Heart left ventricle (tissue), 16 donors: ENCODE measurements at regions of chr1 and their contacts with region 1.

Region 1: DNA sequence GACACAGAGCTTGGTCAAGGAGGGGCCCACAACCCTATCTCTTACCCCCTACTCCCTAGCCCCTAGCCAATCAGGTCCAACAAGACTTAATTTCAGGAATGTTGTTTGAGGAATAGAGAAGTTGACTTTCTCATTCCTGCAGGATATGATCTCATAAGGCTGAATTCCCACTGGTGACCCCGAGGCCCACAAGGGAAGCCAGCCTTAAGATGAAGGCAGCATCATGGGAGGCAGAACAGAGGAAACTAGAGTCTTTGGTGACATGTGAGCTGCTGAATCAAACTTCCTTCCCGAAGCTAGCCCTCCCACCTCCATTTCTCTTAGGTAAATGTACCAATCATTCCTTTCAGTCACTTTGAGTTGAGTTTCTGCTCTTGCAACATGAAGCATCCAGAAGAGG is 9.1 kb upstream of the PDIK1L start:
- DNase-seq: no peak
- ATAC-seq: no peak
- H3K4me3 ChIP-seq: no peak overlapping the region
- H3K27ac ChIP-seq: no peak overlapping the region
- H3K4me1 ChIP-seq: peaks cover 0 to 11% (median 2%) of the 10 kb centered on the region in 12 donors
- H3K27me3 ChIP-seq: no peaks in the 10 kb centered on the region
- CTCF ChIP-seq: no peak
- POLR2A ChIP-seq: no peak

Region 2: DNA sequence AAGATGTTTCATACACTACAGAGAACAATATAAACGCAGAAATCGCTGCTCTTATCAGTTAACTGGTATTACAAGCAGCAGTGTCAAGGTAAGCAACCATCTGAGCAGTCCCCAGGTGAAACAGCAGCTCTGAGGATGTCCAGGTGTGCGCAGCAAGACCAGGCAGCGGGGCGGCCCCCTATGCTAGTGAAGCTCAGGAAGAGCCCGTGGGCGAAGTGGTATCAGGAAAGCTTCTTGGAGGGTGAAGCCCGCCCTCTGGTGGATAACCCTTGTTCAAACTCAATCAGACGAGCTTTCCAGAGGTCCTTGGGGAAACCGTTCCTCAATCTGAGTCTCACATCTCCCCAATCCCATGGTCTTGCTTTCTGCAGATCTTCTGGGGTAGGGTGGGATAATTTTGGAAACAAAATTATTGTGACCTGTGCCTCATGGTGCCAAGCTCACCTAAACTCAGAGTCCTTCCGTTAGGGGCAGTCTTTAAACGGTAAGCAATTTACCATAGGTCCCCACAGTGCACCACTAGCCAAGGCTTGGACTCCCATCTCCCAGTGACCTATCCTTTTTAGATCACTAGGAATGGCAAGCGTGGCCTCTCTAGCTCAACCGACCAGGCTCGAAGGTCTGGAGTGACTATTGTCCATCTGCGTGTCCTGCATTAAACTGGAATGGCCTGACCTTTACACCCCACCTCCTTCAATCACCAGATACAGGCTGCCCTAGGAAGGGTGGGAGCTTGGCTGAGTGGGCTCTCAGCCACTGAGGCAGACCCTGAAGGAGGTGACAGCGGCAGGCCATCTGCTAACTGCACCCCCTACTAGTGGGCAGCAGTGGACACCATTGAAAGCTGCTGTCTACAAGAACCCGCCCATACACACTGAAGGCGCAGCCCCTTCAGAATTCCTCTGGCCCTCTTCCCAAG is 42.8 kb after region 1 on chr1:
- intact Hi-C with region 1: loop called (anchors 1 to 5 kb)
- DNase-seq: peak; percentile 77 to 83 (median 80)
- ATAC-seq: peak; percentile 82 to 96 (median 94)
- H3K4me3 ChIP-seq: no peak overlapping the region
- H3K27ac ChIP-seq: no peak overlapping the region
- H3K4me1 ChIP-seq: peaks cover 0 to 10% (median 0%) of the 10 kb centered on the region in 12 donors
- H3K27me3 ChIP-seq: no peaks in the 10 kb centered on the region
- CTCF ChIP-seq: peak; percentile 71 to 89 (median 80)
- POLR2A ChIP-seq: no peak

Region 3: DNA sequence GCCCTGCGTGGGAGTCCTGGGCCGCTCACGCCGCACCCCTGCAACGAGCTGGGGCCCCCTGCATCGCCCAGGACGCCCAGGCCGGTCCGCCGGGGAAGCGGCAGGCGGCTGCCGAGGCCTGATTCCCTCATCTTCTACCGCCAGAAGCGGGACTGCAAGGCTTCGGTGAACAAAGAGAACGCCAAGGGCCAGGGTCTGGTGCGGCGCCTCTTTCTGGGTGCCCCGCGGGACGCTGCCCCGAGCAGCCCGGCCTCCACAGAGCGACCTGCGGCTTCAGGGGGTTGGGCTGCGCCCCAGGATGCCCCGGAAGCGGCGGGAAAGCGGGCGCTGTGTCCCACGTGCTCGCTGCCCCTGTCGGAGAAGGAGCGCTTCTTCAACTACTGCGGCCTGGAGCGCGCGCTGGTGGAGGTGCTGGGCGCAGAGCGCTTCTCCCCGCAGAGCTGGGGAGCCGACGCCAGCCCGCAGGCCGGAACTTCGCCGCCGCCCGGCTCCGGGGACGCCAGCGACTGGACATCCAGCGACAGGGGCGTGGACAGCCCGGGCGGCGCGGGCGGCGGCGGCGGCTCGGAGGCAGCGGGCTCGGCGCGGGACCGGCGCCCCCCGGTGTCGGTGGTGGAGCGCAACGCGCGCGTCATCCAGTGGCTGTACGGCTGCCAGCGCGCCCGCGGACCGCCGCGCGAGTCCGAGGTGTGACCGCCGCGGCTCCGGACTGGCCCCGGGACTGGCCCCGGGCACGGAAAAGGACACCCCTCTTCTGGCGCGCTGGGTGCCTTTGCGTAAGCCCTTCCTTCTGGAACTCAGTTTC is 59.1 kb after region 1 on chr1:
- intact Hi-C with region 1: loop called in 5 of 10 experiments (anchors 1 to 5 kb)
- DNase-seq: peak; percentile 77 to 87 (median 77)
- ATAC-seq: peak in 3 of 4 donors; percentile 25 to 69 (median 61)
- H3K4me3 ChIP-seq: peak overlapping the region; percentile 34 to 73 (median 60)
- H3K27ac ChIP-seq: peak overlapping the region in 11 of 12 donors; percentile 82 to 99 (median 92)
- H3K4me1 ChIP-seq: peaks cover 6 to 77% (median 44%) of the 10 kb centered on the region in 12 donors
- H3K27me3 ChIP-seq: peaks cover 0 to 38% (median 0%) of the 10 kb centered on the region in 9 donors
- CTCF ChIP-seq: peak in 6 of 12 donors; percentile 35 to 50 (median 44)
- POLR2A ChIP-seq: peak in 1 of 2 donors; percentile 64

Region 4: GRCh38 chr1:26203642-26204318 is 101.3 kb after region 1 on chr1:
- intact Hi-C with region 1: no loop called
- DNase-seq: no peak
- ATAC-seq: no peak
- H3K4me3 ChIP-seq: no peak overlapping the region
- H3K27ac ChIP-seq: no peak overlapping the region
- H3K4me1 ChIP-seq: peaks cover 0 to 17% (median 0%) of the 10 kb centered on the region in 12 donors
- H3K27me3 ChIP-seq: no peaks in the 10 kb centered on the region
- CTCF ChIP-seq: no peak
- POLR2A ChIP-seq: no peak

Region 5: DNA sequence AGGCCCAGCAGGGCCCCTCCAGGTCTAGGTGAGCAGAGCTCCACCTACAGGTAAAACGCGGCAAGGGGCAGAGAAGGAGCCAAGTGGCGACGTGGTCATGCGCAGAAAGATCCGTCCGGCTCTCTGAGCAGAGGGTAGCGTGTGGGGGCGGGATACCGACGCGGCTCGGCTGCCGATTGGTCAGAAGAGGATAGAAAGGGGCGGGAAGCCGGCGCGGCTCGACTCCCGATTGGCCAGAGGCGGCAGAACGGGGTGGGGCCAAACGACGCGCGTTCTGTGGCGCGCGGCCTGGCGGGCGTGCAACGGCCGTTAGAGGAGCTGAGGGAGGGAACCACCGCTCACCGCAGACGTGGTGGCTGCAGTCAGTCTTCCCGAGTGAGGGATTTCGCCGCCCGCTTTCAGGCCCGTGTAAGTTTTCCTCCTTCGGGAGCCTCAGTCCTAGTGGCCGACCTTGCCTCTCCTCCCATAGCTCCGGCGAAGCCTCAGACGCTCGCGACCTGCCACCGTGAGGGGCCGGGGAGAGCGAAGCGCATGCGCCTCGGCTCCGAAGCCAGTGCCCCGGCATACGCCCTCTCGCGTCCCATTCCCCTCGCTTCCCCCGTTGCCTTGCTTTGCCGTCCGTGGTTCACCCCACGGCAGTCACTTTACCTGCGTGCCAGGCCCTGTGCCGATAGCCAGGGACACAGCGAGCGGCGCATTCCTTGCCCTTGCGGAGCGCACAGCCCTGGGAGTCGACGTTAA is 131.5 kb after region 1 on chr1 and contains the start of gene CEP85:
- intact Hi-C with region 1: loop called in 5 of 10 experiments (anchors 5 to 10 kb)
- DNase-seq: peak; percentile 97 to 99 (median 98)
- ATAC-seq: peak; percentile 99 to 100 (median 99)
- H3K4me3 ChIP-seq: peak within 1 kb of the TSS; percentile 48 to 90 (median 78)
- H3K27ac ChIP-seq: peak within 1 kb of the TSS; percentile 5 to 96 (median 93)
- H3K4me1 ChIP-seq: peaks cover 0 to 36% (median 11%) of the 10 kb centered on the region in 12 donors
- H3K27me3 ChIP-seq: no peaks in the 10 kb centered on the region
- CTCF ChIP-seq: peak; percentile 72 to 95 (median 86)
- POLR2A ChIP-seq: peak; percentile 61 to 93
- total RNA-seq, gene CEP85: 28.6 to 180 (median 48.7) TPM

Region 6: DNA sequence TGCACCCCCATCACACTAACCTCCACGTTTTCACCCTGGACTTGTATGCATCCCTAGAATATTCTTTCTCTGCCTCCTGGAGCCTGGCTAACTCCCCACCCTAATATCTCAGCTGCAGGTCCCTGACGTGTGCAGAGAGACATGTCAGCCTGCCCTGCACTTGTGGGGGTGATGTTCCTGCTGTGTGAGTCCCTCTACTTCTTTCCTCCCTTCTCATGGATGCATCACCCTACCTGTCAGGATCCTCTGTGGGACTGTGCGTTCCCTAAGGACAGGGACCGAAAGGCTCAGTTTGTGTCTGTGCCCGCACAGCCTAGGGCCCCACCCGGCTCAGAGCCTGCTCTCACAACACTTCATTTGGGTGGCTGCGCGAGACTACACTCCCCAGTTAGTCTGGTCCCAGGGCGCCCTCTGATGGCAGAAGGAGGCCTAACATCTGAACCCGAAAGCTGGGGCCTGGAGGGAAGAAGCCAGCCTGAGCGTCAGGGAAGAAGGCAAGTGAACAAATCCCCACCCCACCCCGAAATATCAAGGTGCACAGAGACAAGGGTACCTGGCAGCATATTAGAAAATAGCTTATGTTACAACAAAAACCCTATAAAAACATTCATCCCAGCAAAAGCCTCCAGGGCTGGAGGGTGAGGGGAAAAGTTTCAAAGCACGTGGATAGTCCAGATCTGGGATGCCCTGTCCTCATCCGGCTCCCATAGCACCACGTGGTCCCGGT is 219.0 kb after region 1 on chr1:
- intact Hi-C with region 1: loop called in 9 of 10 experiments (anchors 2 to 10 kb)
- DNase-seq: peak; percentile 89 to 95 (median 92)
- ATAC-seq: peak; percentile 82 to 94 (median 92)
- H3K4me3 ChIP-seq: peak overlapping the region in 2 of 12 donors; percentile 30 to 34
- H3K27ac ChIP-seq: peak overlapping the region in 1 of 12 donors; percentile 60
- H3K4me1 ChIP-seq: peaks cover 0 to 47% (median 7%) of the 10 kb centered on the region in 12 donors
- H3K27me3 ChIP-seq: no peaks in the 10 kb centered on the region
- CTCF ChIP-seq: peak; percentile 81 to 92 (median 90)
- POLR2A ChIP-seq: no peak

Region 7: GRCh38 chr1:26417111-26417759 is 314.7 kb after region 1 on chr1:
- intact Hi-C with region 1: loop called in 1 of 10 experiments (anchors 5 kb)
- DNase-seq: peak; percentile 51 to 86 (median 69)
- ATAC-seq: peak; percentile 67 to 84 (median 81)
- H3K4me3 ChIP-seq: no peak overlapping the region
- H3K27ac ChIP-seq: no peak overlapping the region
- H3K4me1 ChIP-seq: no peaks in the 10 kb centered on the region
- H3K27me3 ChIP-seq: peaks cover 7 to 52% (median 20%) of the 10 kb centered on the region in 9 donors
- CTCF ChIP-seq: peak; percentile 57 to 89 (median 76)
- POLR2A ChIP-seq: no peak